Calu3 (cell line): ENCODE measurements at regions of chr2 and their contacts with region 1.

Region 1: DNA sequence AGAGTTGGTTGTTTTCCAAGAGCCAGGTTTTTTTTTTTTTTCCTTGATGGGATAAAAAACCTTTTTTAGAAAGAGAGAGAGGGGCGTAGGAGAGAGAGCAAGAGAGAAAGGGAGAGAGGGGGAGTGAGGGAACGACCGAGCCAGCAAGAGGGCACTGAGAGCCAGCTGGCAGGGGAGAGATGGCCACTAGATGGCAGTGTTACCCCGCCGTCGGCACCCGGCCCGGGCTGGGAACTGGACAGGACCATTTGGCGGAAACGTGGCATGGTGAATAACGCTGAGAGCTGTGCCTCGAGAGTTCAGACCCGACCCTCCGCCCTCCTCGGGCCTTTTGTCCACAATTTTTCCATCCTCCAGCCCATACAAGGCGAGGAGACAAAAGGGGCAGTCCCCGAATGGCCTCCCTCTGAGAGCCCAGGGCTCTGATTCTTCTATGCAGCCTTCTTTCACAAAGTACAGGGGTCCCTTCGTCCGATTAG is 286.7 kb upstream of the VRK2 start:
- DNase-seq: peak; percentile 95
- H3K4me3 Mint-ChIP-seq: peak overlapping the region; percentile 63
- H3K27ac Mint-ChIP-seq: peak overlapping the region; percentile 72
- H3K4me1 Mint-ChIP-seq: peaks cover 22% of the 10 kb centered on the region
- H3K27me3 Mint-ChIP-seq: no peaks in the 10 kb centered on the region
- CTCF ChIP-seq: peak; percentile 92

Region 2: GRCh38 chr2:57685032-57685431 is 74.8 kb before region 1 on chr2:
- CTCF ChIA-PET with region 1: no interaction called
- intact Hi-C with region 1: no loop called
- DNase-seq: no peak
- H3K4me3 Mint-ChIP-seq: no peak overlapping the region
- H3K27ac Mint-ChIP-seq: no peak overlapping the region
- H3K4me1 Mint-ChIP-seq: no peaks in the 10 kb centered on the region
- H3K27me3 Mint-ChIP-seq: no peaks in the 10 kb centered on the region
- CTCF ChIP-seq: no peak

Region 3: GRCh38 chr2:57881998-57882884 is 122.4 kb after region 1 on chr2:
- CTCF ChIA-PET with region 1: no interaction called
- intact Hi-C with region 1: loop called (anchors 5 kb)
- DNase-seq: peak; percentile 1
- H3K4me3 Mint-ChIP-seq: no peak overlapping the region
- H3K27ac Mint-ChIP-seq: no peak overlapping the region
- H3K4me1 Mint-ChIP-seq: peaks cover 8% of the 10 kb centered on the region
- H3K27me3 Mint-ChIP-seq: no peaks in the 10 kb centered on the region
- CTCF ChIP-seq: no peak

Region 4: GRCh38 chr2:57906152-57906732 is 146.4 kb after region 1 on chr2:
- CTCF ChIA-PET with region 1: interaction called, 3 read pairs
- intact Hi-C with region 1: loop called (anchors 1 kb)
- DNase-seq: no peak
- H3K4me3 Mint-ChIP-seq: no peak overlapping the region
- H3K27ac Mint-ChIP-seq: no peak overlapping the region
- H3K4me1 Mint-ChIP-seq: no peaks in the 10 kb centered on the region
- H3K27me3 Mint-ChIP-seq: no peaks in the 10 kb centered on the region
- CTCF ChIP-seq: peak; percentile 42

Region 5: GRCh38 chr2:58025150-58025933 is 265.5 kb after region 1 on chr2:
- CTCF ChIA-PET with region 1: no interaction called
- intact Hi-C with region 1: no loop called
- DNase-seq: no peak
- H3K4me3 Mint-ChIP-seq: no peak overlapping the region
- H3K27ac Mint-ChIP-seq: no peak overlapping the region
- H3K4me1 Mint-ChIP-seq: no peaks in the 10 kb centered on the region
- H3K27me3 Mint-ChIP-seq: no peaks in the 10 kb centered on the region
- CTCF ChIP-seq: no peak

Region 6: DNA sequence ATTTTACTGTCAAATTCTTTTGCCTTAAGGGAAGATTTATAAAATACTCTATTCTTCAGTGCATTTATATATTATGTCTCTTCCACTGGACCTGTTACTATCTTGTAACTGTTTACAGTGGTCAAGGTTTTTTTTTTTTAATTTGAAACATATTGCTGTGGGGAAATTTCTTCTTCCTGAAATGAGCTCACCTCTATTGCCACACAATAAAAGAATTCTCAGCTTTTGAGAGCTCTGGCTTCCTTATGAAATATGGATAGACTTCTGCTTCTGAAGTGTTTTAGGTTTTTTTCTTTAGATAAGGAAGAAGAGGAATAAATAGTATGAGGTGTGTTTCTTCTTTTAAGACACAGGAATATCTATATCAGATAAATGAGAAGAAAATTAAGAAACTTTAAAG is 294.4 kb after region 1 on chr2:
- CTCF ChIA-PET with region 1: no interaction called
- intact Hi-C with region 1: loop called (anchors 5 kb)
- DNase-seq: no peak
- H3K4me3 Mint-ChIP-seq: no peak overlapping the region
- H3K27ac Mint-ChIP-seq: no peak overlapping the region
- H3K4me1 Mint-ChIP-seq: no peaks in the 10 kb centered on the region
- H3K27me3 Mint-ChIP-seq: no peaks in the 10 kb centered on the region
- CTCF ChIP-seq: no peak

Region 7: GRCh38 chr2:58156780-58157179 is 396.9 kb after region 1 on chr2:
- CTCF ChIA-PET with region 1: no interaction called
- intact Hi-C with region 1: loop called (anchors 10 kb)
- DNase-seq: no peak
- H3K4me3 Mint-ChIP-seq: no peak overlapping the region
- H3K27ac Mint-ChIP-seq: no peak overlapping the region
- H3K4me1 Mint-ChIP-seq: peaks cover 8% of the 10 kb centered on the region
- H3K27me3 Mint-ChIP-seq: no peaks in the 10 kb centered on the region
- CTCF ChIP-seq: no peak